Activated CD8-positive, alpha-beta memory T cell treated with anti-CD3 and anti-CD28 coated beads, Interleukin-2, amount 10 ng/mL, durations not matched to agents 7 days and 5 days (primary cell): ENCODE measurements at regions of chr17 and their contacts with region 1.

Region 1: DNA sequence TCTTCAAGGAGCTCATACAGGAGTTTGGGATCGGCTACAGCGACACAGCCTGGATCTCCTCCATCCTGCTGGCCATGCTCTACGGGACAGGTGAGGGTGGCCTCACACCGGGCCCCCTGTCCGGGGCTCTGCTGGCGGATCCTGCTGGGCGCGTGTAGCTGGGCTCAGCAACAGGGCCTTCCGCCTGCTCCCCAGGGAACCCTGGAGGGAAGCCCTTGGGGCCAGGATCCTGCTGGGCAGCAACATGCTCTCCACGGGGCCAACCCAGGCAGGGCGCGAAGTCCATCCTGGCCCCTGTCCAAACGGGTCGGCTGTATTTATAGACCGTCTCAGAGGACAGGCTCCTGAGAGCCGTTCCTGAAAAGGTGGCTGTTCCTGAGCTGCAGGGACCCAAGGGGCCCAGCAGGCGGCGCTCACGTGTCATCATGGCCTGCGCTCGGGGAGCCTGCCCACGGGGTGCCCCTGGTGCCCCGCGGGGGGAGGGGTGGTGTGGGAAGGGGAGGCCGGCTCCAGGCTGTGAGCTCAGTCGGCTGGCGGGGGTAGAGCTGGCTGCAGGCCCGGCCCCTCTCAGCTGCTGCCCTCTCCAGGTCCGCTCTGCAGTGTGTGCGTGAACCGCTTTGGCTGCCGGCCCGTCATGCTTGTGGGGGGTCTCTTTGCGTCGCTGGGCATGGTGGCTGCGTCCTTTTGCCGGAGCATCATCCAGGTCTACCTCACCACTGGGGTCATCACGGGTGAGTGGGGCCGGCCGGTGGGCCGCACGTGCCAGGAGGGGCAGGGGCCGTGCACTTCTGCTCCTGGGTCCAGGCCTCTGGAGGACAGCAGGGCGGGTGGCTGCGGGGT is 7.5 kb downstream of the SLC16A3 start:
- DNase-seq: peak; percentile 75
- ATAC-seq: peak; percentile 21
- H3K4me3 Mint-ChIP-seq: no peak overlapping the region
- H3K27ac Mint-ChIP-seq: no peak overlapping the region
- H3K4me1 Mint-ChIP-seq: peaks cover 63% of the 10 kb centered on the region
- H3K27me3 Mint-ChIP-seq: no peaks in the 10 kb centered on the region

Region 2: DNA sequence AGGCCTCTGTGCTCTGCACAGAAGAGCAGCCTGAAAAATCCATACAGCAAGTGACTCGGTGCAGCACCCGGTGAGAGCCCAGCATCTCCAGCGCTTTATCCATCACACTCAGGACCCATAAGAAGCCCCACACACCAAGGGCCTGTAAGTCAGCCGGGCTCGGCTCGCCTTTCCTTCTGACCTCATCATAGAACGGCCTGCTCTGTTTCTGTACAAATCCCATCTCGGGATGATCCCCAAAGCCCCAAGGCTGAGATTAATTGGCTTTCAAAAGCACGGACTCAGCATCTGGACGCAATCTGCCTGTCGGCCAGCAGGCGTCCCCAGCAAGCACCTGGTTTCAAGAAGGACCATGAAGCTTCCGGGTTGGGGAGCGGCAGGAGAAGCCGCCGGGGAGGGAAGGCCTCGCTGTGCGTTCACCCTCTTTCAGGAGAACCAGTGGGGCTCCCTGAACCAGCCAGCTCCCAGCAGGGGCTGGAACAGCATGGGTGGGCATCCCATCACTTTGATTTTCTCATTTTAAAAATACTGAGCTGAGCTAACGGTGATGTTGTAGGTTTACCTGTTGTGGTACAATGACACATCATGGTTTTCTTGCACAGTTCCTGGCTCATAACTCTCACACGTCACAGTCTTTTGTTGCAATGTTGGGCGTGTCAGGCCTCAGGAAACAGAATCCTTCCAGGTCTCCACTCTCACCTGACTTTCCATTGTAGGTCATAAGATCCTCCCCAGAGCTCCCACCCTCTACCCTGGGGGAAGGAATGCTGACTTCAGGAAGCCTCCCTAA is 30.4 kb before region 1 on chr17:
- CTCF ChIA-PET with region 1: interaction called, 14 read pairs
- DNase-seq: peak; percentile 92
- ATAC-seq: peak; percentile 86
- H3K4me3 Mint-ChIP-seq: peak overlapping the region; percentile 49
- H3K27ac Mint-ChIP-seq: peak overlapping the region; percentile 95
- H3K4me1 Mint-ChIP-seq: peaks cover 52% of the 10 kb centered on the region
- H3K27me3 Mint-ChIP-seq: no peaks in the 10 kb centered on the region

Region 3: DNA sequence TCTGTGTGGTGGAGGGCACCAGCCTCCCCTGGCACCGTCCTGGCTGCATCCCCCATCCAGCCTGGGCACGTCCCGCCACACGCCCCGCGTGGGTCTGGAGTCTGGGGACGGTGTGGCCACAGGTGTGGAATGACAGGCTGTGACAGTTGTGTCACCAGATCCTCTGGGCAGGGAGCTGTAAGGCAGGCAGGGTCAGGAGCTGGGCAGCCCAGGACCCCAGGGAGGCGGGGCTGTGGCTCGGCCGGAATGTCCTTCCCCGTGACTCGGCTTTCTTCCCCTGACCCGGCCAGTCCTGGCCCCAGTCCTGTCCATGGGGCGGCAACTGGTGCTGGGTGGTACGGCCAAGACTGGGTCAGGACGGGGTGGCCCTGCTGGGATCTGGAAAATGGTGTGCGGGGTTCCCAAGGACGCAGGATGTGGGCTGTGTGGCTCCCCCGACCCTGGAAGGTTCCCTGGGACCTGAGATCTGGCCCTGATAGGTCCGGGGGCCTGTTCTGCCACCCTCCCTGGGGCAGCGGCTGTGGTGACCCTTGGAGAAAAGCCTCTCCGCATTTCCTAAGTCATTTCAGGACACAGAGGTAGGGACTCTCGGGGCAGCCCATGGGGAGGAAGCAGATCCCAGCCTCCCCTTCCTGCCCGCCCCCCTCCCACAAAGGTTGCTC is 10.9 kb before region 1 on chr17:
- CTCF ChIA-PET with region 1: interaction called, 14 read pairs
- DNase-seq: no peak
- ATAC-seq: no peak
- H3K4me3 Mint-ChIP-seq: no peak overlapping the region
- H3K27ac Mint-ChIP-seq: no peak overlapping the region
- H3K4me1 Mint-ChIP-seq: peaks cover 9% of the 10 kb centered on the region
- H3K27me3 Mint-ChIP-seq: no peaks in the 10 kb centered on the region

Region 4: GRCh38 chr17:82246365-82247174 is 10.2 kb after region 1 on chr17:
- CTCF ChIA-PET with region 1: interaction called, 10 read pairs
- DNase-seq: no peak
- ATAC-seq: no peak
- H3K4me3 Mint-ChIP-seq: no peak overlapping the region
- H3K27ac Mint-ChIP-seq: no peak overlapping the region
- H3K4me1 Mint-ChIP-seq: peaks cover 11% of the 10 kb centered on the region
- H3K27me3 Mint-ChIP-seq: no peaks in the 10 kb centered on the region

Region 5: DNA sequence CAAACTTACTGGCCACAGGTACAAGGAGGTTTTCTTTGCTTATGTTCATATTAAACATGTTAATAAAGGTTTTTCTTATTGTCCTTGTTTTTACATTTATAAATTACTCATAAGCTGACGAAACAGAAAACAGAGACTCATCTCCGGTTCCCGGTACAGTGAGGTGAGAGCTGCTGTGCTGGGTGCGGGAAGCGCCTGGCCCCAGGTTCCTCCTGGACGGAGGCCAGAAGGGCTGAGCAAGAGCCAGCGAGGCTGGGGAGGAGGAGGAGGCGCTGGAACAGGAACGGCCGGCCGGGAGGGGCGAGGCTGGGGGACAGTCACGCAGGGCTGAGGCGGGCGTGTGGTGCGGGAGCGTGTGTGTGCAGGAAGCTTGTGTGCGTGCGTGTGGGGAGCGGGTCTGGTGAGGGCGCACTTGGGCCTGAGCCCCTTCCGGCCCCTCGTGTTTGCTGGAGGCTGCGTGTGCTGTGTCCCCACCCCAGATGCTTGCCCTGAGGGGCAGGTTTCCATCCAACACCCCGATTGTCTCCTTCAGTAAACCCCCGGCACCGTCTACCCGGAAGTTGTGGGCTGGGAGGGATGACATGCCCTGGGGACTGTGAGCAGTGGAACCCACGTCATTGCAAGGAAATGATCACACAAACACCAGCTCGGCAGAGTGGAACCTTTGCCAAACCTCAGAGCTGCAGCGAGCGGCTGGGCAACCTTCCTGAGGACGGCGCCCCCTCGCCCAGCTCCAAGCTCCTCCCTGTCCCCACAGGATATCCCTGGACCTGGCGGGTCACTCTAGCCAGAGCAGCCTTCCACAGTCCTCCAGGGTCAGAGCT is 61.6 kb after region 1 on chr17:
- CTCF ChIA-PET with region 1: interaction called, 21 read pairs
- DNase-seq: peak; percentile 97
- ATAC-seq: peak; percentile 70
- H3K4me3 Mint-ChIP-seq: peak overlapping the region; percentile 82
- H3K27ac Mint-ChIP-seq: peak overlapping the region; percentile 100
- H3K4me1 Mint-ChIP-seq: peaks cover 86% of the 10 kb centered on the region
- H3K27me3 Mint-ChIP-seq: no peaks in the 10 kb centered on the region

Region 6: DNA sequence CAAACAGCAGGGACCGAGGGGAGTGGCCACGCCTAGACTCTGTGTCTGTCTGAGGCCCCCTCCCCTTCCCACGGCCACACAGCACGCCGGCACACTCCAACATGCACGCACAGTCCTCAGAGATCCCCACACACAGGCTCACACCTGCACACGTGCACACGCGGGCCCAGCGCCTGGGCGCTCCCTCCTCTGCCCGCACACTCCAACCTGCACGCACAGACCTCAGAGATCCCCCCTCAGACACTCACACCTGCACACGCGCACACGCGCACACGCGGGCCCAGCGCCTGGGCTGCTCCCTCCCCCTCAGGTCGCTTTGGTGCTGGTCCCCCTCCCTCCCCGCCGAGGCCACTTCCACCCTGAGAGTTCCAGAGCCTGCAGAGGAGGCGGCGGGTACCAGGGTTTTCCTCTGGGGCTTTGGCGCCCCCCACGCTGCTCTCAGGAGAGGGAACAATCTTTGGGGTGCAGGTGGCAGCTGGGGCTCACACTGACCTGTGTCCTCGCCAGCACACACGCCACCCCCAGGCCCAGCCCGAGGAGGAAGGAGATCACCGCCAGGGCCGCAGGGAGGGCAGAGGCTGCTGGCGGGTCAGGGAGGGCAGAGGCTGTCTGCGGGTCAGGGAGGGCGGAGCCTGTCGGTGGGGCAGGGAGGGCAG is 79.5 kb after region 1 on chr17:
- CTCF ChIA-PET with region 1: interaction called, 48 read pairs
- DNase-seq: peak; percentile 64
- ATAC-seq: peak; percentile 39
- H3K4me3 Mint-ChIP-seq: peak overlapping the region; percentile 93
- H3K27ac Mint-ChIP-seq: peak overlapping the region; percentile 75
- H3K4me1 Mint-ChIP-seq: peaks cover 14% of the 10 kb centered on the region
- H3K27me3 Mint-ChIP-seq: no peaks in the 10 kb centered on the region

Region 7: GRCh38 chr17:82320956-82321927 is 84.9 kb after region 1 on chr17:
- CTCF ChIA-PET with region 1: interaction called, 48 read pairs
- DNase-seq: peak; percentile 67
- ATAC-seq: peak; percentile 43
- H3K4me3 Mint-ChIP-seq: peak overlapping the region; percentile 66
- H3K27ac Mint-ChIP-seq: peak overlapping the region; percentile 71
- H3K4me1 Mint-ChIP-seq: peaks cover 16% of the 10 kb centered on the region
- H3K27me3 Mint-ChIP-seq: no peaks in the 10 kb centered on the region